Gastrocnemius medialis (tissue), 4 donors: ENCODE measurements at regions of chr14 and their contacts with region 1.

Region 1: GRCh38 chr14:102509744-102510615 is at the start of gene ANKRD9:
- DNase-seq: peak; percentile 93 to 95
- ATAC-seq: peak; percentile 57 to 74
- H3K4me3 ChIP-seq: peak within 1 kb of the TSS; percentile 65 to 81 (median 70)
- H3K27ac ChIP-seq: peak within 1 kb of the TSS; percentile 95 to 99 (median 96)
- H3K4me1 ChIP-seq: peaks cover 14 to 33% of the 10 kb centered on the region in 2 donors
- H3K27me3 ChIP-seq: no peaks in the 10 kb centered on the region
- CTCF ChIP-seq: no peak
- POLR2A ChIP-seq: peak; percentile 74 to 81
- total RNA-seq, gene ANKRD9: 155 to 450 (median 216) TPM

Region 2: DNA sequence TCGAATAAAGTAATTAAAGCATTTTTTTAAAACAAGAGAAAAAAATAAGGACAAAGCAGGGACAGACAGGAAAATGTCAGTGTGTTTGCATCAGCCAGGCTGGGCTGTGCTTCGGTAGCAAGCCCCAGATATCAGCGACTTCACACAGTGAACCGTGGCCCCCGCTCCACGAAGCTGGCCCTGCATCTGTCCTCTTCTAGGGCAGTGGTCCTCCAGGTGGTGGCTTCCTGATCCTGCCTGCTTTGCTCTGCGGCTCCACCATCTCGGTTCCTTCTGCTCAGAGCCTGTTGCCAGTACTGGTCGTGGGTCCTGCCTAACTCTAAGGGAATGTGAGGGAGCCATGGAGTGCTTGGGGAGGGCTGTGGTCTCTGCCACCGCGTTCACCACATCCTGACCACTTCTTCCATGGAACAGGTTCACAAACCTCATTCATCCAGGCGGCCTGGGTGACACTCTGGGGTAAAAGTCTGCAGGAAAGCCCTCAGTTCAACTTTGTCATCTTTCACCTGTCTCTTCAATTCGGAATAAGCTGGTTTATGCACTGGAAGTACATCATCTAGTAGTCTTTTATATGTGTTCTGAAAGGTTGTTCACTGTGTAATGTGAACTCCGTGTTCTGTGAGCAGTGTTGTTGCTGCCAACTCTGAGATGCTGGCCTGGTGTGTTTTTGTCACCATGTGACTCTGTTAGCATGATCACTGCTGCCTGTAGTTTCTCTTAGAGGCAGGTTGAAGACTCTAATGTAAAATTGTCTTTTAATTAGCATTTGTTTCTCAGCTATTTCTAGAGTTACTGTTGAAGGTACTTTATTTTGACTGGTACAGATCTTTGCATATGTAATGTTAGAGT is 48.3 kb before region 1 on chr14:
- in situ Hi-C with region 1: no loop called
- intact Hi-C with region 1: loop called (anchors 2 kb)
- DNase-seq: peak; percentile 72 to 79
- ATAC-seq: peak; percentile 95 to 97
- H3K4me3 ChIP-seq: no peak overlapping the region
- H3K27ac ChIP-seq: peak overlapping the region; percentile 87 to 96 (median 92)
- H3K4me1 ChIP-seq: peaks cover 27 to 32% of the 10 kb centered on the region in 2 donors
- H3K27me3 ChIP-seq: no peaks in the 10 kb centered on the region
- CTCF ChIP-seq: no peak
- POLR2A ChIP-seq: no peak

Region 3: GRCh38 chr14:102474934-102475333 is 35.0 kb before region 1 on chr14:
- in situ Hi-C with region 1: no loop called
- intact Hi-C with region 1: no loop called
- DNase-seq: peak; percentile 86 to 96
- ATAC-seq: peak; percentile 94 to 96
- H3K4me3 ChIP-seq: no peak overlapping the region
- H3K27ac ChIP-seq: peak overlapping the region; percentile 78 to 87 (median 84)
- H3K4me1 ChIP-seq: peaks cover 28 to 50% of the 10 kb centered on the region in 2 donors
- H3K27me3 ChIP-seq: no peaks in the 10 kb centered on the region
- CTCF ChIP-seq: no peak
- POLR2A ChIP-seq: no peak